ENCODE measurements at regions of chr16 and their contacts with region 1.

Region 1: DNA sequence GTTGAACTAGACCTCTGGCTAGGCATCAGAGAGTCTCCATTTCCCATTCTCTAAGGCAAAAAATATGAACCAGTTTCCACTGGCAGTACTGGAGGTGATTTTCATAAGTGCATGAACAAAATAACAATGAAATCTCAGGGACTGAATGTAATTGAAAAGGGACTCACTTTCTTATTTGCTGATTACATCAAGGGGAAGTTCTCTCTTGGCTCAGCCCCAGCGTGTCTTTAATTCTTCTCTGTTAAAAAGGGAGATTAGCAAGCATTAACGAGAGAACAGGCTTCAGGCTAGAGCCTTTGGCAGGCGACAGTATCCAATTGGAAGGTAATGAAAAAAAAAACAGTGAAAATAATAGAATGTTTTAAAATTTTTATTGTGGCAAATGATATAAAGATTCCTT is 34.0 kb upstream of the ADAMTS18 start:
- DNase-seq: no peak
- H3K4me3 ChIP-seq: no peak overlapping the region
- H3K27ac ChIP-seq: no peak overlapping the region
- H3K4me1 ChIP-seq: no peaks in the 10 kb centered on the region
- H3K27me3 ChIP-seq: no peaks in the 10 kb centered on the region
- CTCF ChIP-seq: no peak
- POLR2A ChIP-seq: no peak

Region 2: DNA sequence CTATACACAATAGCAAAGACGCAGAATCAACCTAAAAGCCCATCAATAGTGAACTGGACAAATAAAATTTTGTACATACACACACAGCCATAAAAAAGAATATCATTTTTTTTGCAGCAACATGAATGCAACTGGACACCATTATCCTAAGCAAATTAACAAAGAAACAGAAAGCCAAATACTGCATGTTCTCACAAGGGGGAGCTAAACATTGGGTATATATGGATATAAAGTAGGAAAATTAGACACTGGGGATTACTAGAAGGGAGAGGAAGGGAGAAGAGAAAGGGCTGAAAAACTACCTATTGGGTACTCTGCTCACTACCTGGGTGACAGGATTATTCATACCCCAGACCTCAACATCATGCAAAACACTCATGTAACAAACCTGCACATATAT is 62.2 kb before region 1 on chr16:
- intact Hi-C with region 1: loop called (anchors 10 kb)
- DNase-seq: no peak
- H3K4me3 ChIP-seq: no peak overlapping the region
- H3K27ac ChIP-seq: no peak overlapping the region
- H3K4me1 ChIP-seq: no peaks in the 10 kb centered on the region
- H3K27me3 ChIP-seq: no peaks in the 10 kb centered on the region
- CTCF ChIP-seq: no peak
- POLR2A ChIP-seq: no peak